Vagina (tissue), 2 donors: ENCODE measurements at regions of chr11 and their contacts with region 1.

Region 1: GRCh38 chr11:68913188-68913587 is 9.5 kb downstream of the IGHMBP2 start:
- DNase-seq: no peak
- H3K4me3 ChIP-seq: no peak overlapping the region
- H3K27ac ChIP-seq: no peak overlapping the region
- H3K4me1 ChIP-seq: no peaks in the 10 kb centered on the region
- H3K27me3 ChIP-seq: no peaks in the 10 kb centered on the region
- CTCF ChIP-seq: no peak
- POLR2A ChIP-seq: no peak

Region 2: DNA sequence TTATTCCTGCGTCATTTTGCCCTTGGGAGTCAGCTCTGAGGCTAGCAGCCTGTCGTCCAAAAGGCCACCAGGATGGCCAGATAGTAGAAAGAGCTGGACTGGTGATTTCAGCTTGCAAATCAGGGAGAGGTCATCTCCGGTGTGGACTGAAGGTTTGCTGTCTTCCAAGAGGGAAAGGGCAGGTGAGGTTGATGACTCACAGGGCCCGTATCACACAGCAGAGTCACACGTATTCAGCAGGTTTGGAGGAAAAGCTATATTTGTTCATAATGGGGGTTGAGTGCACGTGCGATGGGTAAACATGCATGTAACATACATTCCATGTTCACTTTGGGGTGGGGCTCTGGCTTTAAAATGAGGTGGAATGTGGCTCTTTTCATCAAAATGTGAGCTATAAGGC is 35.2 kb before region 1 on chr11:
- intact Hi-C with region 1: loop called (anchors 1 kb)
- DNase-seq: no peak
- H3K4me3 ChIP-seq: no peak overlapping the region
- H3K27ac ChIP-seq: no peak overlapping the region
- H3K4me1 ChIP-seq: peaks cover 3% of the 10 kb centered on the region
- H3K27me3 ChIP-seq: no peaks in the 10 kb centered on the region
- CTCF ChIP-seq: no peak
- POLR2A ChIP-seq: no peak

Region 3: DNA sequence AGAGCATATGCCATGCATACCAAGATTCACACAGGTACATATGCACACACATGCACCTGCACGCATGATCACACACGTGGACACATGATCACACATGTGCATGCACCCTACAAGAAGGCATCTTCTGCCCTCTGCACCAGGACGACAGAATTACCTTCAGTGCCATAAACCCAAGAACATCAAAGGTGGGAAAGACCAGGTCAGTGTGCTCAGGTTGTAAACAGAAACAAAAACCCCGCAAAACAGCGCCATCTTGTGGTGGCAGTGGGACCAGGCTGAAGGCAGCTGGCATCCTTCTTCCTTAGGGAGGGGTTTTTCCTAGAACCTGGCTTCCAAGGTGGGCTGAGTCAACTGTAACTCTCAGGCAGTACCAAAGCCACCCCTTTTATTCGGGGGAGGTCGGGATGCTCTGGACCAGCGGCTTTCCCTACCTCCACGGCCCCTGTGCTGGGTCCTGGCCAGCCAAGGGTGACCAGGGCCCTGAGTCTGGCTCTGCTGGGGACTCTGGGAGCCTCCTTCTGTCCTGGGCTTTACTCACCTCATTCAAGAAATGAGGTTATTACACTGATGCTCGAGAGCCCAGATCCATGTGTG is 975.4 kb after region 1 on chr11:
- intact Hi-C with region 1: no loop called
- DNase-seq: no peak
- H3K4me3 ChIP-seq: no peak overlapping the region
- H3K27ac ChIP-seq: no peak overlapping the region
- H3K4me1 ChIP-seq: no peaks in the 10 kb centered on the region
- H3K27me3 ChIP-seq: no peaks in the 10 kb centered on the region
- CTCF ChIP-seq: peak; percentile 50 to 74 (median 50)
- POLR2A ChIP-seq: no peak

Region 4: GRCh38 chr11:69934861-69935494 is 1021.8 kb after region 1 on chr11:
- intact Hi-C with region 1: no loop called
- DNase-seq: no peak
- H3K4me3 ChIP-seq: no peak overlapping the region
- H3K27ac ChIP-seq: no peak overlapping the region
- H3K4me1 ChIP-seq: peaks cover 4% of the 10 kb centered on the region
- H3K27me3 ChIP-seq: no peaks in the 10 kb centered on the region
- CTCF ChIP-seq: no peak
- POLR2A ChIP-seq: no peak